AG04450 (cell line): ENCODE measurements at regions of chr11 and their contacts with region 1.

Region 1: GRCh38 chr11:65773784-65774411 is 6.9 kb downstream of the AP5B1 start:
- DNase-seq: no peak
- H3K4me3 ChIP-seq: no peak overlapping the region
- H3K27ac ChIP-seq: no peak overlapping the region
- H3K27me3 ChIP-seq: no peaks in the 10 kb centered on the region
- CTCF ChIP-seq: peak; percentile 21; the same call in 1 of the 2 replicates

Region 2: DNA sequence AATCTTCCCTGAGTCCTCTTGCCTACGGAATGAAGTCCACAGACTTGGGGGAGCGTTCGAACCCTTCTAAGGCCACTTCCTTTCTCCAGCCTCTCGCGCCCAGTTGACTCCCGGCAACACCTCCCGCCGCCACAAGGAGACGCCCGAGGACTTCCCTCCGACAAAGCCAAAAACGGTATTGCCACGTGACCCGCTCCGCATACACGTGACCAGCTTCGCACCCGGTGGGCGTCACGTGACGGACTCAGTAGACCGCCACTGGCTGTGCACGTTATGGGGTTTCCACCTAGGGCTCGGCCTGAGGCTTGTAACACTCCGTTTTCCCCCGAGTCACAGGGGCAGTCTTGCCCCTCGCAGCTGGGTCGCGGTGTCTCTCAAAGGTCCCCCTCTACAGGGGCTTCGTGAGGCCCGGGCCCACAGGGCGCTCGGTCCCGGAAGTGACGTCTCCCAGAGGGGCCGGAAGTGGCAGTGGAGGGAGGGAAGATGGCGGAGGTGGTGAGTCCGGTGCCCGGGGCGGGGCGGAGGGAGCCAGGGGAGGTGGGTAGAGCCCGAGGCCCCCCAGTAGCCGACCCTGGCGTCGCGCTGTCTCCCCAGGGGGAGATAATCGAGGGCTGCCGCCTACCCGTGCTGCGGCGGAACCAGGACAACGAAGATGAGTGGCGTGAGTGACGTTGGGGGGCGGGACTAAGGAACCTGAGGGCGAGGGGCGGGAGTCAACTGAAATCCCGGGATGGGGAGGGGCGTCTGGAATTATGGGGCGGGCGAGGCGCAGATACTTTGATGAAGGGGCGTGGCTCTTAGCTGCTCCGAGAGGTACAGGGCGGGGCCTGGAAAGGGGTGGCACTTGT is 61.9 kb before region 1 on chr11 and contains the start of gene KAT5:
- CTCF ChIA-PET with region 1: interaction called, 18 read pairs
- POLR2A ChIA-PET with region 1: interaction called, 8 read pairs
- DNase-seq: peak; percentile 96
- H3K4me3 ChIP-seq: peak within 1 kb of the TSS; percentile 84
- H3K27ac ChIP-seq: peak within 1 kb of the TSS; percentile 99
- H3K27me3 ChIP-seq: peaks cover 5% of the 10 kb centered on the region
- CTCF ChIP-seq: peak; percentile 98
- polyA plus RNA-seq, gene KAT5: 22.6 and 26.1 TPM in 2 replicates

Region 3: GRCh38 chr11:65720237-65720934 is 53.5 kb before region 1 on chr11 and contains the start of gene RNASEH2C:
- CTCF ChIA-PET with region 1: no interaction called
- POLR2A ChIA-PET with region 1: interaction called, 10 read pairs
- DNase-seq: peak; percentile 50
- H3K4me3 ChIP-seq: peak within 1 kb of the TSS; percentile 87
- H3K27ac ChIP-seq: peak within 1 kb of the TSS; percentile 52
- H3K27me3 ChIP-seq: no peaks in the 10 kb centered on the region
- CTCF ChIP-seq: no peak
- polyA plus RNA-seq, gene RNASEH2C: 14.2 and 20.8 TPM in 2 replicates

Region 4: GRCh38 chr11:65742353-65742752 is 31.5 kb before region 1 on chr11:
- CTCF ChIA-PET with region 1: interaction called, 12 read pairs
- POLR2A ChIA-PET with region 1: no interaction called
- DNase-seq: no peak
- H3K4me3 ChIP-seq: no peak overlapping the region
- H3K27ac ChIP-seq: no peak overlapping the region
- H3K27me3 ChIP-seq: peaks cover 10% of the 10 kb centered on the region
- CTCF ChIP-seq: no peak

Region 5: GRCh38 chr11:65817835-65818742 is 44.2 kb after region 1 on chr11:
- CTCF ChIA-PET with region 1: interaction called, 22 read pairs
- POLR2A ChIA-PET with region 1: no interaction called
- DNase-seq: peak; percentile 55
- H3K4me3 ChIP-seq: peak overlapping the region; percentile 77
- H3K27ac ChIP-seq: no peak overlapping the region
- H3K27me3 ChIP-seq: peaks cover 13% of the 10 kb centered on the region
- CTCF ChIP-seq: peak; percentile 93

Region 6: GRCh38 chr11:66159324-66159984 is 385.6 kb after region 1 on chr11:
- CTCF ChIA-PET with region 1: interaction called, 12 read pairs
- POLR2A ChIA-PET with region 1: no interaction called
- DNase-seq: no peak
- H3K4me3 ChIP-seq: no peak overlapping the region
- H3K27ac ChIP-seq: no peak overlapping the region
- H3K27me3 ChIP-seq: no peaks in the 10 kb centered on the region
- CTCF ChIP-seq: no peak